HepG2 (cell line): ENCODE measurements at regions of chr1 and their contacts with region 1.

Region 1: GRCh38 chr1:26900001-26900814 is at the start of gene GPATCH3:
- DNase-seq: peak; percentile 88
- ATAC-seq: peak; percentile 89
- H3K4me3 ChIP-seq: peak within 1 kb of the TSS; percentile 76 to 94 (median 89)
- H3K27ac ChIP-seq: peak within 1 kb of the TSS; percentile 89
- H3K4me1 ChIP-seq: peaks cover 47% of the 10 kb centered on the region
- H3K27me3 ChIP-seq: no peaks in the 10 kb centered on the region; a peak in 1 of 5 replicates
- CTCF ChIP-seq: no peak
- EP300 ChIP-seq: peak in 1 of 2 experiments; percentile 36; a peak in 1 of 4 replicates
- POLR2A ChIP-seq: peak; percentile 79 to 98
- RAD21 ChIP-seq: no peak; the same call in none of the 2 replicates
- total RNA-seq, gene GPATCH3: 11.0 and 12.5 TPM in 2 replicates

Region 2: DNA sequence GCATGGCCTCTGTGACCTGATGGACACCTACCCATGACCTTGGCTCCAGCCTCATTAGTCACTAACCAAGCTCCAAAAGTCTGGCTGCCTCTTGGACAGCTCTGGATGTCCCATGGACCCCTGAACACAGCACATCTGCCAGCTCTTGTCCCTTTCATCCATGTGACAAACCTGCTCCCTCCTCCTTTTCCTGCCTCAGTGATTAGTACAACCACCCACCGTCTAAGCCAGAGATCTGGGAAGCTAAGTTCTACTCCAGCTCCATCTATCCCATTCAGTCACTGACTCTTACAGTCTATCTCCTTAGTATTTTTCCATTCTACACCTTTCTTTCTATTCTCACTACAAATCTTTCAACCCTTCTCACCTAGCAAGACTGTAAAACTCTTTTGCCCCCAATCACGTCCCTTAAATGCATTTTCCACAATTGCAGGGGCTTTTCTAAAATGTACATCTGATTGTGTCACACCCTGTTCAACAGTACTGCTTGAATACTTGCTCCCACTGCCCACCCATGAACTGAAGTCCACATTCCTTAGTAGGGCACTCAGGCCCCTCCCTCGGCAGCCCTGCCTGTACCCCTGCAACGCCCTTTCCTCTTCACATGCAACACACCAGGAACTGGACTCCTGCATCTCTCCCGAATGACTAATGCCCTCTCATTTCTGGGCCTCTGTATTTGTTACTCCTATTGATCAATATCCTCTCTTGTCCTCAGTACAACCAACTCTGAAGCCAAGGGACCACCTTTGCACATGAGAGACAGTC is 17.3 kb before region 1 on chr1:
- CTCF ChIA-PET with region 1: no interaction called
- POLR2A ChIA-PET with region 1: interaction called, 11 read pairs
- in situ Hi-C with region 1: no loop called
- intact Hi-C with region 1: no loop called
- DNase-seq: no peak
- ATAC-seq: peak; percentile 48
- H3K4me3 ChIP-seq: no peak overlapping the region
- H3K27ac ChIP-seq: peak overlapping the region; percentile 14
- H3K4me1 ChIP-seq: peaks cover 37% of the 10 kb centered on the region
- H3K27me3 ChIP-seq: no peaks in the 10 kb centered on the region
- CTCF ChIP-seq: no peak
- EP300 ChIP-seq: no peak
- POLR2A ChIP-seq: no peak
- RAD21 ChIP-seq: no peak

Region 3: GRCh38 chr1:26921540-26922430 is 21.6 kb after region 1 on chr1 and contains the start of gene NUDC:
- CTCF ChIA-PET with region 1: no interaction called
- POLR2A ChIA-PET with region 1: interaction called, 10 read pairs
- in situ Hi-C with region 1: no loop called
- intact Hi-C with region 1: no loop called
- DNase-seq: peak; percentile 93
- ATAC-seq: peak; percentile 97
- H3K4me3 ChIP-seq: peak within 1 kb of the TSS; percentile 64 to 98 (median 82)
- H3K27ac ChIP-seq: peak within 1 kb of the TSS; percentile 77
- H3K4me1 ChIP-seq: peaks cover 53% of the 10 kb centered on the region
- H3K27me3 ChIP-seq: no peaks in the 10 kb centered on the region; a peak in 1 of 5 replicates
- CTCF ChIP-seq: no peak
- EP300 ChIP-seq: no peak; a peak in 1 of 4 replicates
- POLR2A ChIP-seq: peak; percentile 85 to 92
- RAD21 ChIP-seq: peak; percentile 59
- total RNA-seq, gene NUDC: 104 and 126 TPM in 2 replicates